ENCODE measurements at regions of chr20 and their contacts with region 1.

Region 1: DNA sequence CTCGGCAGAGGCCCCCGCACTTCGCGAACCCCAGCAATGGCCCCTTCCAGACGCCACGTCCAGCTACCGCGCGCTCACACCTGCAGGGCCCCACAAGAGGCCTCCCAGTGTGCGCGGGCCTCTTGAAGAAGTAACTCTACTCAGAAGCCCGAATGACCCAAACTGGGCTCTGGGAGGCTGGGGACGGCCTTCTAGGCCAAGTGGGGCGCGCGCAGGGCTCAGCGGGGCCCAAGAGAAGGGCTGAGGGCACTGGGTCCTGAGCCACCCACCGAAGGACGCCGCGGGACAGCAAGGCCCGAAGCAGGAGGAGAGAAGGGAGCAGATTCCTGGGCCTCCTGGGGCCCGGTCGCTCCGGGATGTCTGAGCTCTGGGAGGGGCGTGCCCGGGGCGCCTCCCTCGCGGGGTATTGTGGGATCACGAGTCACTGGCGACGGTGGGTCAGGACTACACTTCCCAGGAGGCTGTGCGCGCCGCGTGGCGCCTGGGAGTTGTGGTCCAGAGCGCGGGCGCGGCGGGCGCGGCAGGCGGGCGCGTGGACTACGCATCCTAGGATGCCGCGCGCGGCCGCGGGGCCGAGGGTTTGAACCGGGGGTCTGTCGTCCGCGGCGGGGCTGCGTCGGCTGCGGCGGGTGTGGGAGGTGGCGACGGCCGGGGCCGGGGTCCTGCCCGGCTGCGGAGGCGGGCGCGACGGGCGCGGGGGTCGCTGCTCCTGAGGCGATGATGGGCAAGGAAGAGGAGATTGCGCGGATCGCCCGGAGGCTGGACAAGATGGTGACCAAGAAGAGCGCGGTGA is at the start of gene TCEA2:
- DNase-seq: peak; percentile 96
- ATAC-seq: peak; percentile 76
- H3K4me3 ChIP-seq: peak within 1 kb of the TSS; percentile 82 to 98 (median 90)
- H3K27ac ChIP-seq: peak within 1 kb of the TSS; percentile 78
- H3K4me1 ChIP-seq: peaks cover 65% of the 10 kb centered on the region
- H3K27me3 ChIP-seq: peaks cover 0 to 3% of the 10 kb centered on the region in 2 experiments; a peak in 2 of 5 replicates
- CTCF ChIP-seq: peak; percentile 32; the same call in 1 of the 2 replicates
- EP300 ChIP-seq: peak in 1 of 2 experiments; percentile 10; a peak in 1 of 4 replicates
- POLR2A ChIP-seq: peak in 1 of 2 experiments; percentile 81; a peak in 2 of 4 replicates
- RAD21 ChIP-seq: peak; percentile 40; the same call in 1 of the 2 replicates
- total RNA-seq, gene TCEA2: 25.9 and 33.7 TPM in 2 replicates

Region 2: DNA sequence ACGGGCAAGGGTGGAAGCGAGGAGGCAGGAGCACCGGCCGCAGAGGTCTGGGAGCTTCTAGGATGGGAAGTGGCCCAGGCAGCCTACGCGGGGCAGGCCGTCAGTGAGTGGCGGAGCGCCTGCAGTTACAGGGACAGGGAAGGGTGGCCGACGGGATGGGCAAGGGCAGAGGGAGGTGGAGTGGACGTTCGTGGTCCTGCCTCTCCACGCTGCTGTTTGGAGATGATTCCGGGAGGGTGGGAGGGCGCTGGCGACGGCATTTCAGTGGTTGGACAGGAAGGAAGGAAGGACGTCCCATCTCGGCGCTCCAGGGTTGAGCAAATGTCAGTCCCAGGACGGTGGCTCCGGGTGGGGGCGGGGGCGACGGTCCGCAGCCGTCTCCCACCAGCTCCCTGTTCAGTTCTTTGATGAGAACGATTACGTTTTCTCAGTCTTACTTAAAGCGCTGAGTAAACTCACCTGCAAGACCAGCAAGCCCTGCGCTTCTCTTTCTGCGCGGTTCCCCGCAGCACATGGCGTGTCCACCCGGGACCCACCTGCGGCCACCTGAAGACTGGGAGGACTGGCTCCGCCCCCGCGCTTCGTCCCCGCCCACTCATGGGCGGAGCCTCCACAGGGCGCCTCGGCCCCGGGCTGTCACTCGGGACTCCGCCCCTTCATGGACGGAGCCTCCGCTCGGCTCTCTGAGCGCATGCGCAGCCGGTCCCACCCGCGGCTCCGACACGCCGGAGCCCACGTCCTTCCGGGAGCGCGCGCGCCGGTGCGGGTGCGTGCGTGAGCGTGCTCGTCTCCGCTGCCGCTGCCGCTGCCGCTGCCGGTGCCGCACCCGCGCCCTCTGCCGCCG is 168.2 kb before region 1 on chr20 and contains the start of gene DNAJC5:
- CTCF ChIA-PET with region 1: no interaction called
- POLR2A ChIA-PET with region 1: interaction called, 11 read pairs
- in situ Hi-C with region 1: no loop called
- intact Hi-C with region 1: no loop called
- DNase-seq: peak; percentile 95
- ATAC-seq: peak; percentile 82
- H3K4me3 ChIP-seq: peak within 1 kb of the TSS; percentile 73 to 82 (median 77)
- H3K27ac ChIP-seq: peak within 1 kb of the TSS; percentile 60
- H3K4me1 ChIP-seq: peaks cover 39% of the 10 kb centered on the region
- H3K27me3 ChIP-seq: no peaks in the 10 kb centered on the region; a peak in 1 of 5 replicates
- CTCF ChIP-seq: no peak
- EP300 ChIP-seq: peak in 1 of 2 experiments; percentile 49; a peak in 1 of 4 replicates
- POLR2A ChIP-seq: peak; percentile 76 to 87
- RAD21 ChIP-seq: 0 out of 2 replicates have a peak, but pooled peaks have one; percentile 56
- total RNA-seq, gene DNAJC5: 54.3 and 64.5 TPM in 2 replicates

Region 3: GRCh38 chr20:64038565-64039292 is 24.1 kb before region 1 on chr20:
- CTCF ChIA-PET with region 1: no interaction called
- POLR2A ChIA-PET with region 1: interaction called, 252 read pairs
- in situ Hi-C with region 1: no loop called
- intact Hi-C with region 1: loop called (anchors 2 kb)
- DNase-seq: no peak
- ATAC-seq: no peak
- H3K4me3 ChIP-seq: no peak overlapping the region
- H3K27ac ChIP-seq: peak overlapping the region; percentile 45
- H3K4me1 ChIP-seq: peaks cover 71% of the 10 kb centered on the region
- H3K27me3 ChIP-seq: no peaks in the 10 kb centered on the region
- CTCF ChIP-seq: peak; percentile 27; the same call in 1 of the 2 replicates
- EP300 ChIP-seq: no peak
- POLR2A ChIP-seq: no peak
- RAD21 ChIP-seq: no peak

Region 4: GRCh38 chr20:64079273-64080012 is 16.7 kb after region 1 on chr20 and contains the start of gene RGS19:
- CTCF ChIA-PET with region 1: no interaction called
- POLR2A ChIA-PET with region 1: interaction called, 25 read pairs
- in situ Hi-C with region 1: no loop called
- intact Hi-C with region 1: loop called (anchors 2 kb)
- DNase-seq: peak; percentile 70
- ATAC-seq: peak; percentile 17
- H3K4me3 ChIP-seq: peak within 1 kb of the TSS; percentile 77 to 89 (median 85)
- H3K27ac ChIP-seq: peak within 1 kb of the TSS; percentile 35
- H3K4me1 ChIP-seq: peaks cover 59% of the 10 kb centered on the region
- H3K27me3 ChIP-seq: peaks cover 5 to 15% of the 10 kb centered on the region in 2 experiments; a peak in 4 of 5 replicates
- CTCF ChIP-seq: no peak
- EP300 ChIP-seq: no peak
- POLR2A ChIP-seq: no peak; a peak in 1 of 4 replicates
- RAD21 ChIP-seq: peak; percentile 56; the same call in 1 of the 2 replicates
- total RNA-seq, gene RGS19: 10.2 and 10.7 TPM in 2 replicates

Region 5: GRCh38 chr20:64151634-64152530 is 89.1 kb after region 1 on chr20:
- CTCF ChIA-PET with region 1: no interaction called
- POLR2A ChIA-PET with region 1: no interaction called
- in situ Hi-C with region 1: no loop called
- intact Hi-C with region 1: no loop called
- DNase-seq: peak; percentile 71
- ATAC-seq: peak; percentile 14; the same call in 1 of the 3 replicates
- H3K4me3 ChIP-seq: no peak overlapping the region
- H3K27ac ChIP-seq: no peak overlapping the region
- H3K4me1 ChIP-seq: peaks cover 27% of the 10 kb centered on the region; the same call in 1 of the 2 replicates
- H3K27me3 ChIP-seq: peaks cover 17 to 49% of the 10 kb centered on the region in 2 experiments
- CTCF ChIP-seq: no peak
- EP300 ChIP-seq: 0 out of 4 replicates have a peak, but pooled peaks of 1 of the 2 experiments have one; percentile 46
- POLR2A ChIP-seq: no peak
- RAD21 ChIP-seq: no peak

Measured in HepG2 (cell line).